Testis (tissue), 5 donors: ENCODE measurements at regions of chr5 and their contacts with region 1.

Region 1: GRCh38 chr5:80093796-80094195 is 58.6 kb downstream of the THBS4 start:
- DNase-seq: no peak
- H3K4me3 ChIP-seq: no peak overlapping the region
- H3K27ac ChIP-seq: peak overlapping the region in 1 of 2 donors; percentile 20
- H3K4me1 ChIP-seq: peaks cover 20% of the 10 kb centered on the region
- H3K27me3 ChIP-seq: no peaks in the 10 kb centered on the region
- CTCF ChIP-seq: no peak
- POLR2A ChIP-seq: no peak

Region 2: GRCh38 chr5:80275347-80275746 is 181.6 kb after region 1 on chr5:
- intact Hi-C with region 1: loop called (anchors 10 kb)
- DNase-seq: peak; percentile 54
- H3K4me3 ChIP-seq: no peak overlapping the region
- H3K27ac ChIP-seq: no peak overlapping the region
- H3K4me1 ChIP-seq: no peaks in the 10 kb centered on the region
- H3K27me3 ChIP-seq: no peaks in the 10 kb centered on the region
- CTCF ChIP-seq: peak in 2 of 3 experiments; percentile 31 to 32
- POLR2A ChIP-seq: no peak

Region 3: DNA sequence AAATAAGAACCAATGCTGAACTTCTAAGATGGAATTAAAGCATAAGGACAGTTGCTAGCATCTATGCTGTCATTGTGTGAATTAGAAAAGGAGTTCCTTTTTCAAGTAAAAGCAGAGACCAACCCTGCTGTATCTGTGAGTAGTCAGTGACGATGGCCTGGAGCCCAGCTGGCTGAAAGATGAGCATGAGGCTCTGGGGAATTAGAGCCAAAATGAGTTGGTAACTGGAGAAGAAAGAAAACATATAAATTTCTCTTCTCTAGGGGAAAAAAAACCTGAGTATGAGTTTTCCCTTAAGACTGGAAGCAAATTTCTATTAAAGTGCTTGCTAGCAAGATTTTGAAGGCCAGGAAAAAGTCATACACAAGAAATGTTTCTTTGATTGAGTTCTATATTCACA is 224.4 kb after region 1 on chr5:
- intact Hi-C with region 1: loop called (anchors 5 kb)
- DNase-seq: peak; percentile 26
- H3K4me3 ChIP-seq: no peak overlapping the region
- H3K27ac ChIP-seq: no peak overlapping the region
- H3K4me1 ChIP-seq: no peaks in the 10 kb centered on the region
- H3K27me3 ChIP-seq: no peaks in the 10 kb centered on the region
- CTCF ChIP-seq: no peak
- POLR2A ChIP-seq: no peak